ENCODE measurements at regions of chr18 and their contacts with region 1.

Region 1: GRCh38 chr18:68847219-68847837 is 49.4 kb downstream of the CCDC102B start:
- DNase-seq: no peak

Region 2: GRCh38 chr18:68925268-68925667 is 77.9 kb after region 1 on chr18:
- intact Hi-C with region 1: no loop called
- DNase-seq: no peak

Region 3: DNA sequence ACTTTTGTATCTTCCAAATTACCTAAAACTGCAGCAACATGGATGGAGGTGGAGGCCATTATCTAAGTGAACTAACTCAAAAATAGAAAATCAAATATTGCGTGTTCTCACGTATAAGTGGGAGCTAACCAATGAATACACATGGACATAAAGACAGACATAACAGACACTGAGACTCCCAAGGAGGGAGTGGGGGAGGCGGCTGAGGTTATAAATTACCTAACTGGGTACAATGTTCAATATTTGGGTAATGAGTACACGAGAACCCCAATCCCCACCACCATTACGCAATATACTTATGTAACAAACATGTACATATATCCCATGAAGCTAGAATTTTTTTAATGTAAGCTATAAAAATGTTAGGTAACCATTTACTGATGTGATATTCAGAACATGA is 1238.3 kb after region 1 on chr18:
- intact Hi-C with region 1: loop called (anchors 5 kb)
- DNase-seq: no peak